HEK293T (cell line): ENCODE measurements at regions of chr12 and their contacts with region 1.

Region 1: GRCh38 chr12:71685914-71686665 is at the start of gene TMEM19:
- DNase-seq: peak; percentile 84

Region 2: DNA sequence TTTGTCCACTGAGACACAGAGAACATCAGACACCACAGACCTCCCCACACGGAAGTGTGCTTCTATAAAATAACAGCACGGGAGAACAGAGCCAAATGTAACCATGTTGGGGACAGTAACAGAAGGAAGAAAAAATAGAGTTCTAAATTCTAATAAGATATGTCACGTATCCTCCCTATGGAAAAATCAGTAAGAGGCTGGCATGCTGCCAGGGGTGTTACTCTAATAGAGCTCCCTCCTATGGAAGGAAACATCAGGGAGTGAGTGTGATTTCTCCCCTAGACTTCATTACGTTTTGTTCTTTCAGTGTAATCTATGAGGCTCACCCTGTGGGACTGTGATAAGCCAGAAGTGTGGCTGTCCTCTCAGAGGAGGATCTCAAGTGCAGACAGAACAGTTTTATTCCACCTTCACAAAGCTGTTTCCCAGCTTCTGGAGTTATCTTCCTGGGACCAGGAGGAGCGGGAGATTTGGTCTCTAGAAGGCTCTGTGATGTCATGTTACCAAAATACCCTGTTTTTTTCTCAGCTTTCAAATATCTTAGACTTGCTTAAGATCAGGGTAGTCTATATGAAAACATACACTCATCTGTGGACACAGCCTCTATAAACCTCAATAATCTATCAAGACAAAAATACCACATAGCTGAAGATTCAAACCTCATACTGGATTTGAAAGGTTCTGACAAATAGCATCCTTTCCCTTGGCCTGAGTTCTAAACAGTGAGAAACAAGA is 91.7 kb before region 1 on chr12:
- CTCF ChIA-PET with region 1: no interaction called
- POLR2A ChIA-PET with region 1: no interaction called
- DNase-seq: peak; percentile 18

Region 3: DNA sequence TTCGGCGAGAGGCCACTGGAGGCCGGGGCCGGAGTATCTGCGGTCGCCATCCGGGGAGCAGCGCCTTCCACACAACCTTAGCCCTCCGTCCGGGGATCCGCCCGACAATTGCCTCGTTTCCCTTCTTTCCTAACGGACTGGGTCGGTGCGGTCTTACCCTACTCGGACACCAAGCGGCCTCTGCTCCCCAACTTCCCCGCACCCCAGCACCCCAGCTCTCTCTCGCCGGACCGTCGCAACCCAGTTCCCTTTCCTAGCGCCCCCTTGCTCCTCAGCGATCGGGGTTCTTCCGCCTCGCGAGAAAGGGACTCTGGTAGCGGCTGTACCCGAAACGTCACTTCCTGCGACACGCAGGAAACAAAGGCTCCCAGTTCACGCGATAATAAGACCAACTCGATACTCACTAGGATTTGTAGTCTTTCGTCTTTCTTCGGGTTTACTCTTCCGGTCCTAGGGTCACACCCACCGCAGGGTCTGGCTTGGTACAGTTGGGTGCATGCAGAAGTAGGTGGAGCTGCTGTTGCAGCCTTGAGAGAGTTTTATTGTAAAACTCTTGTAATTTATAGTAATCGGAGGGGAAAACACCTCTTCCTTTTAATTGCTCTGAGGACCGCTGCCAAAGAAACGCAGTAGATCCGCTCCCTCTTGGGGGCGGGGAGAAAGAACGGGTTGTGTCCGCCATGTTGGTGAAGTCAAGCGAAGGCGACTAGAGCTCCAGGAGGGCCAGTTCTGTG is 22.4 kb before region 1 on chr12 and contains the start of gene ZFC3H1:
- CTCF ChIA-PET with region 1: interaction called, 4 read pairs
- POLR2A ChIA-PET with region 1: interaction called, 50 read pairs
- DNase-seq: peak; percentile 92

Region 4: DNA sequence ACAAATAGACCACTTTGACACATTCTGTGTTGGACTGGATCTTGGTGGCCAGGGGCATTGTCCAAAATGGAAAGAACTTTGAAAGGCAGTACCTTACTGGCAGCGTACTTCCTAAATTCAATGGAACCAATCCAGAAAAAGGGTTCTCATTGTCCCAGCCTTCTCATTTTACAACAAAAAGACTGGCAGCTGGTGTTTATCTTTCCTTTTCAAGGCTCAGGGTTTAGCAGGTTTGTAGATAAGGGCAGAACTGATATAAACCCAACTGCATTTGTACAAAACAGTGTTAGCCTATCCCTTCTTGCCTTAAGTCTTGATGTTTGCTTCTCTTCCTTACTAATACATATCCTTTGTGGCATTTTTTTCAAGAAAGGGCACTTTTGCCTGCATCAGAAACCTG is 14.3 kb before region 1 on chr12:
- CTCF ChIA-PET with region 1: interaction called, 6 read pairs
- POLR2A ChIA-PET with region 1: interaction called, 16 read pairs
- DNase-seq: no peak

Region 5: GRCh38 chr12:71754461-71755145 is 68.5 kb after region 1 on chr12 and contains the start of gene RAB21:
- CTCF ChIA-PET with region 1: no interaction called
- POLR2A ChIA-PET with region 1: interaction called, 10 read pairs
- DNase-seq: peak; percentile 98